B cell (primary cell): ENCODE measurements at regions of chr7 and their contacts with region 1.

Region 1: DNA sequence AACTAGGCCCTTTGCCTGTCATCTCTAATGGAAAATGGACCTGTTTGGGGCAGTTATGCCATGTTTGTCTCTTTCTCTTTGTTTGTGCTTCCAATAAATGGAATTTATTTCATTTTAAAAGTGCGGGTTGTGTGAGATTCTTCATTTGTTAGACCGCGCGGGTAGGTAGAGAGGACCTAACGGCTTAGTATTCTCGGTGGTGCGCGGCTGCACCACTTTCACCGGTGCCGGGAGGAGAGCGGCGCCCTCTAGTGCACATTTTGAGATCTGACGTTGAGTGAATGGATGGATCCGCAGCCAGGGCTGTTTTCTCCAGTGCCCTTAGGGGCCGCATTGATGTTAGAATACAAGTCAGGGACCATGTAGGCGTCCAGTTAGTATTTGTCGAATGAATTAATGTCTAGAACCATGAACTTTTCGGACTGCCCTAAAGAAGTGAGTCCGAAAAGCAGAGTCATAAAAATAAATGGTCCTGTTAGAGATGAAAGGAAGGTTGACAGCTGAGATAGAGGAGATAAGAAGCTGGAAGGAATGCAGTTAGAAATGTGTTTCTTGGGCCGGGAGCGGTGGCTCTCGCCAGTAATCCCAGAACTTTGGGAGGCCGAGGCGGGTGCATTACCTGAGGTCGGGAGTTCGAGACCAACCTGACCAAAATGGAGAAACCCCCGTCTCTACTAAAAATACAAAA is 29.3 kb upstream of the GIMAP8 start:
- DNase-seq: peak; percentile 90
- ATAC-seq: peak; percentile 99
- H3K4me3 ChIP-seq: peak overlapping the region in 1 of 5 experiments; percentile 4
- H3K4me3 Mint-ChIP-seq: peak overlapping the region; percentile 7
- H3K27ac ChIP-seq: no peak overlapping the region
- H3K27ac Mint-ChIP-seq: peak overlapping the region; percentile 51
- H3K4me1 ChIP-seq: peaks cover 0 to 5% of the 10 kb centered on the region in 2 donors
- H3K4me1 Mint-ChIP-seq: peaks cover 5% of the 10 kb centered on the region
- H3K27me3 ChIP-seq: no peaks in the 10 kb centered on the region
- H3K27me3 Mint-ChIP-seq: peaks cover 4% of the 10 kb centered on the region
- CTCF ChIP-seq: peak; percentile 97

Region 2: DNA sequence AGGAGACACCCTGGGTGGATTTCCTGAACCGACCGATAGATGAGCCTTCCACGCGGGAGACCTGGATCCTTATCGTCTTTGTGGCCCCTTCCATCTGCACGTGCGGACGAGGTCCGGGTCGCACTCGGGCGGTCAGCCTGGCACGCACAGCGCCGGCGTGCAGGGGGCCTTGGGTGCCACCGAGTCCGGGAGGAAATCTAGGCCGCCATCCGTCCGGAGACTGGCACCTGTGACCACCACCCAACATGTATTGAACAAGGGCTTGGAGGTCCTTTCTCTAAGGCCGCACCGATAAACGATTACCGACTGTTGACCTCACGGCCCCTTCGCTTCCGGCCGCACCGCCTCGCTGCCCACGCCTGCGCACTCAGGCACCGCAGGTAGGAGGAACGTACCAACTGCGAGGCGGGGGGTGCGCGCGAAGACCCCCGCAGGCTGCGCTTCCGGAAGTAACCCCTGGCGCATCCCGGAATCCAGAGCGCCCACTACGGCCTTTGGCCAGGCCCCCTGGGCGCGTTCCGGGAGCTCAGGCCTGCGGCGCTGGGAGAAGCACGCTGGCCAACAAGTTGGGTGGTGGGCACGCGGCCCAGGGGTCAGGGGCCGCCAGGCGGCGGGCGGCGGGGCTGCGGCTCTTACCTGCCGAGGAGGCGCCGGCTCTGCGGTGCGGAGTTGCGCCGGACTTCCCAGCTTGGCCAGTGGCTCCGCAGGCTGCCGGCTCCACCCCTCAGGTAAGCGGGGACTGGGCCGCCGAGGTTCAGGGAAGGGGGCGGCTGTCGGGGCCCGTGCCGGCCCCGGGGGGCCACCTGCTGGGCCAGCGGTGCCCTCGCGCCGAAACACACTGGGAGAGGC is 98.1 kb before region 1 on chr7 and contains the starts of genes ACTR3C and LRRC61:
- CTCF ChIA-PET with region 1: no interaction called
- POLR2A ChIA-PET with region 1: no interaction called
- intact Hi-C with region 1: loop called (anchors 1 kb)
- DNase-seq: peak; percentile 79
- ATAC-seq: peak; percentile 78
- H3K4me3 ChIP-seq: peak within 1 kb of the TSS; percentile 75 to 94 (median 88)
- H3K4me3 Mint-ChIP-seq: peak within 1 kb of the TSS; percentile 99
- H3K27ac ChIP-seq: peak within 1 kb of the TSS; percentile 82 to 88
- H3K27ac Mint-ChIP-seq: peak within 1 kb of the TSS; percentile 98
- H3K4me1 ChIP-seq: peaks cover 11 to 34% of the 10 kb centered on the region in 2 donors
- H3K4me1 Mint-ChIP-seq: peaks cover 47% of the 10 kb centered on the region
- H3K27me3 ChIP-seq: no peaks in the 10 kb centered on the region
- H3K27me3 Mint-ChIP-seq: no peaks in the 10 kb centered on the region
- CTCF ChIP-seq: no peak
- total RNA-seq, gene ACTR3C: 20.7 TPM in 2 replicates
- total RNA-seq, gene LRRC61: 12.8 and 15.5 TPM in 2 replicates

Region 3: GRCh38 chr7:150378853-150379440 is 42.2 kb before region 1 on chr7 and contains the start of gene ZNF775:
- CTCF ChIA-PET with region 1: interaction called, 5 read pairs
- POLR2A ChIA-PET with region 1: no interaction called
- intact Hi-C with region 1: loop called (anchors 1 kb)
- DNase-seq: peak; percentile 93
- ATAC-seq: peak; percentile 91
- H3K4me3 ChIP-seq: peak within 1 kb of the TSS; percentile 45 to 91 (median 77)
- H3K4me3 Mint-ChIP-seq: peak within 1 kb of the TSS; percentile 96
- H3K27ac ChIP-seq: peak within 1 kb of the TSS; percentile 84 to 85
- H3K27ac Mint-ChIP-seq: peak within 1 kb of the TSS; percentile 90
- H3K4me1 ChIP-seq: peaks cover 22 to 59% of the 10 kb centered on the region in 2 donors
- H3K4me1 Mint-ChIP-seq: peaks cover 71% of the 10 kb centered on the region
- H3K27me3 ChIP-seq: no peaks in the 10 kb centered on the region
- H3K27me3 Mint-ChIP-seq: no peaks in the 10 kb centered on the region
- CTCF ChIP-seq: peak; percentile 14
- total RNA-seq, gene ZNF775: 12.1 and 12.5 TPM in 2 replicates

Region 4: GRCh38 chr7:150620617-150621371 is 199.7 kb after region 1 on chr7:
- CTCF ChIA-PET with region 1: no interaction called
- POLR2A ChIA-PET with region 1: no interaction called
- intact Hi-C with region 1: no loop called
- DNase-seq: no peak
- ATAC-seq: no peak
- H3K4me3 ChIP-seq: no peak overlapping the region
- H3K4me3 Mint-ChIP-seq: no peak overlapping the region
- H3K27ac ChIP-seq: no peak overlapping the region
- H3K27ac Mint-ChIP-seq: no peak overlapping the region
- H3K4me1 ChIP-seq: no peaks in the 10 kb centered on the region
- H3K4me1 Mint-ChIP-seq: no peaks in the 10 kb centered on the region
- H3K27me3 ChIP-seq: no peaks in the 10 kb centered on the region
- H3K27me3 Mint-ChIP-seq: peaks cover 10% of the 10 kb centered on the region
- CTCF ChIP-seq: no peak